ENCODE measurements at regions of chr18 and their contacts with region 1.

Region 1: GRCh38 chr18:74652392-74652988 is 54.8 kb downstream of the ZNF407 start:
- DNase-seq: no peak
- H3K4me3 ChIP-seq: no peak overlapping the region
- H3K4me3 Mint-ChIP-seq: no peak overlapping the region
- H3K27ac Mint-ChIP-seq: no peak overlapping the region
- H3K4me1 ChIP-seq: no peaks in the 10 kb centered on the region
- H3K4me1 Mint-ChIP-seq: no peaks in the 10 kb centered on the region
- H3K27me3 ChIP-seq: no peaks in the 10 kb centered on the region
- H3K27me3 Mint-ChIP-seq: no peaks in the 10 kb centered on the region
- CTCF ChIP-seq: peak in 1 of 2 experiments; percentile 29

Region 2: DNA sequence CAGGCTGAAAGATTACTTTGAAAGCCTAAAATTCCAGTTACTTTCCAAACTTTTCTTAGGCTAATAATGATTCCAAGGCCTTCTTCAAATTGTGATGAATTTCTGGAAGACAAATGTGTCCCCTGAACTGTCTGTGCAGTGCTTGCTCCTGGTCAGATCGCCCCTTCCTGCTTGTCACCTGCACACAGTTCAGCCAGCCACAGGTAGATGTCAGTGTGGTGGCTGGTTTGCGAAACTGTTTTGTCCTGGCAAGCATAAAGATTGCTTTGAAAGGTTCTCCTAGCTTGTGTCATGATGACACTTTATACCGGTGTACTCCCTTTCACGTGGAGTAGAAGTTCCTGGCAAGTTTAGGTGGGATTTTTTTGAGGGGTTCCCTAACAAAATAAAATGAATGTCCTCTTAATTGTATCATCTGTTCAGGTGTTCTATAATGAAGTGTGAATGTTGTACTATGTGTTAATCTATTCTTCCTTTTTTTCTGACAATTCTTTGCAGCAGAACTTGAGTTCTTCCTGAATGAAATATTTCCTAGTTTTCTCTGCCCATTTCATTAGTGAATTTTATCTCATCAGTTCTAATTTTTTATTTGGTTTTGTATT is 244.0 kb after region 1 on chr18:
- CTCF ChIA-PET with region 1: no interaction called
- POLR2A ChIA-PET with region 1: no interaction called
- intact Hi-C with region 1: loop called (anchors 10 kb)
- DNase-seq: peak; percentile 43 to 46
- H3K4me3 ChIP-seq: no peak overlapping the region
- H3K4me3 Mint-ChIP-seq: no peak overlapping the region
- H3K27ac Mint-ChIP-seq: no peak overlapping the region
- H3K4me1 ChIP-seq: no peaks in the 10 kb centered on the region
- H3K4me1 Mint-ChIP-seq: no peaks in the 10 kb centered on the region
- H3K27me3 ChIP-seq: no peaks in the 10 kb centered on the region
- H3K27me3 Mint-ChIP-seq: no peaks in the 10 kb centered on the region
- CTCF ChIP-seq: peak; percentile 43 to 58

Region 3: DNA sequence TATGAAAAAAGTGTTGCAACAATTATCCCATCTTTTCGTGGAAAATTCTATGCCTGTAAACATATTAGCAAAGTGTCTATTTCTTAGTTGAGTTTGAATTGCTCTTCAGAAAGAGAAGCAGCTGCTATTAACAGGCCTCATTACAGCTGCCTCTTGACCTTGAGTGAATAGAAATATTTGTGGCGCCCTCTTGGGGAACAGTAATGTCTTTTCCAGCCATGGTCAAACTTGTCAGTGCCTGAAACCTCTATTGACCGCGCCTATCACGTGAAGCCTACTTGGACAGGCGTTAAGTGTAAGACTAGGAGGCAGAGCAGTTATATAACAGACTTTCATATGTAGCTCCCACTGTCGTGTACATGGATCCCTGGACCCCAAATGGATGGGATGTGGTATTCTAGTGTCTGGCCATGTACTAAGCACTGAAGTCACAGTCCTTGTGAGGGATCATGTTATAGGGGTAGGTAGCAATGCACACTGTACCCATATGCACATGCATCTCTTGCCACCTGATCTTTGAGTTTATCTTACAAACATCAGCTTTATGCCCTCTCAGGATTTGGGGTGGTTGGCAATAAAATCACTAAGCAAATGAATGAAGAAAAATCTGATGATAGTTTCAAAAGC is 311.4 kb after region 1 on chr18:
- CTCF ChIA-PET with region 1: no interaction called
- POLR2A ChIA-PET with region 1: no interaction called
- intact Hi-C with region 1: loop called (anchors 5 kb)
- DNase-seq: peak; percentile 17 to 26
- H3K4me3 ChIP-seq: no peak overlapping the region
- H3K4me3 Mint-ChIP-seq: no peak overlapping the region
- H3K27ac Mint-ChIP-seq: no peak overlapping the region
- H3K4me1 ChIP-seq: no peaks in the 10 kb centered on the region
- H3K4me1 Mint-ChIP-seq: no peaks in the 10 kb centered on the region
- H3K27me3 ChIP-seq: no peaks in the 10 kb centered on the region
- H3K27me3 Mint-ChIP-seq: no peaks in the 10 kb centered on the region
- CTCF ChIP-seq: peak in 1 of 2 experiments; percentile 9

Region 4: GRCh38 chr18:75041586-75041985 is 389.1 kb after region 1 on chr18:
- CTCF ChIA-PET with region 1: no interaction called
- POLR2A ChIA-PET with region 1: no interaction called
- intact Hi-C with region 1: loop called (anchors 10 kb)
- DNase-seq: no peak
- H3K4me3 ChIP-seq: no peak overlapping the region
- H3K4me3 Mint-ChIP-seq: no peak overlapping the region
- H3K27ac Mint-ChIP-seq: no peak overlapping the region
- H3K4me1 ChIP-seq: no peaks in the 10 kb centered on the region
- H3K4me1 Mint-ChIP-seq: no peaks in the 10 kb centered on the region
- H3K27me3 ChIP-seq: no peaks in the 10 kb centered on the region
- H3K27me3 Mint-ChIP-seq: no peaks in the 10 kb centered on the region
- CTCF ChIP-seq: no peak